Activated CD4-positive, alpha-beta memory T cell treated with anti-CD3 and anti-CD28 coated beads, Interleukin-2, amount 10 ng/mL, durations not matched to agents 7 days and 5 days (primary cell): ENCODE measurements at regions of chr2 and their contacts with region 1.

Region 1: DNA sequence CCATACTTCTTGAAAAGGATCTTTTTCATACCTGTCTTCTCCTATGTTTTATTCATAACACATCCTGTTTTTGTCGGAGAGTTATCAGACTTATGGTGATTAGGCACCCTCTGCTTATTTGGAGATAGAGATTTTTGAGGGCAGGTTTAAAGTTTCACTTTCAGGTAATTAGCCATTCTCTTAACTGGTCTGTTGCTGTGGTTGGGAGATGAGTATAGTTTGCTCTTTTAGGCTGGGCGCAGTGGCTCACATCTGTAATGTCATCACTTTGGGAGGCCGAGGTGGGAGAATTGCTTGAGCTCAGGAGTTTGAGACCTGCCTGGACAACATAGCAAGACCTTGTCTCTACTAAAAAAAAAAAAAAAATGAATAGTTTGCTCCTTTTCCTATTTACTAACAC is 25.3 kb downstream of the SFTPB start:
- DNase-seq: peak; percentile 41
- H3K4me3 Mint-ChIP-seq: no peak overlapping the region
- H3K27ac Mint-ChIP-seq: peak overlapping the region; percentile 88
- H3K4me1 Mint-ChIP-seq: peaks cover 28% of the 10 kb centered on the region
- H3K27me3 Mint-ChIP-seq: no peaks in the 10 kb centered on the region

Region 2: DNA sequence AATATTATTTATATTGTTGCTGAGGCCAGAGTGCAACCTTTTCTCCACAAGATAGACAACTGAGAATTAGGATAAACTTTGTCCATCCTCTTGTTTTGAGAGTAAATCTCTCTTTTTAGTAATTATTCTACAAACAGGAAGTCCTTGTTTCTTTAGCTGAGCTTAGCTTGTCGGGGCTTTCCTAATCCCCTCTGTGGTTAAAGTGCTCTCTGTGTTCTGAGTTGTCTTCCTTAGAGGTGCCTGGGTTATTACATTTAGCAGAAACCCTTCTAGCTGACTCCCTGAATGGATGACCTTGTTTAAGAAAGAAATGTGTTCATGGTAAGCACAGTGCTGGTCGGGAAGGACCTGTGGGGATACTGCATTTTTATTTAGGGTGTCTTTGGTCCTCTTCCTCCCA is 14.1 kb before region 1 on chr2:
- CTCF ChIA-PET with region 1: interaction called, 83 read pairs
- POLR2A ChIA-PET with region 1: interaction called, 7 read pairs
- DNase-seq: no peak
- H3K4me3 Mint-ChIP-seq: no peak overlapping the region
- H3K27ac Mint-ChIP-seq: peak overlapping the region; percentile 59
- H3K4me1 Mint-ChIP-seq: peaks cover 14% of the 10 kb centered on the region
- H3K27me3 Mint-ChIP-seq: no peaks in the 10 kb centered on the region

Region 3: GRCh38 chr2:85655961-85656417 is 13.3 kb after region 1 on chr2:
- CTCF ChIA-PET with region 1: interaction called, 83 read pairs
- POLR2A ChIA-PET with region 1: interaction called, 5 read pairs
- DNase-seq: no peak
- H3K4me3 Mint-ChIP-seq: no peak overlapping the region
- H3K27ac Mint-ChIP-seq: no peak overlapping the region
- H3K4me1 Mint-ChIP-seq: peaks cover 11% of the 10 kb centered on the region
- H3K27me3 Mint-ChIP-seq: no peaks in the 10 kb centered on the region

Region 4: GRCh38 chr2:85707304-85707703 is 64.6 kb after region 1 on chr2:
- CTCF ChIA-PET with region 1: interaction called, 58 read pairs
- POLR2A ChIA-PET with region 1: interaction called, 7 read pairs
- DNase-seq: peak; percentile 75
- H3K4me3 Mint-ChIP-seq: no peak overlapping the region
- H3K27ac Mint-ChIP-seq: peak overlapping the region; percentile 86
- H3K4me1 Mint-ChIP-seq: peaks cover 80% of the 10 kb centered on the region
- H3K27me3 Mint-ChIP-seq: peaks cover 5% of the 10 kb centered on the region

Region 5: GRCh38 chr2:85712849-85713602 is 70.3 kb after region 1 on chr2:
- CTCF ChIA-PET with region 1: interaction called, 58 read pairs
- POLR2A ChIA-PET with region 1: interaction called, 7 read pairs
- DNase-seq: peak; percentile 9
- H3K4me3 Mint-ChIP-seq: no peak overlapping the region
- H3K27ac Mint-ChIP-seq: no peak overlapping the region
- H3K4me1 Mint-ChIP-seq: peaks cover 54% of the 10 kb centered on the region
- H3K27me3 Mint-ChIP-seq: peaks cover 9% of the 10 kb centered on the region

Region 6: DNA sequence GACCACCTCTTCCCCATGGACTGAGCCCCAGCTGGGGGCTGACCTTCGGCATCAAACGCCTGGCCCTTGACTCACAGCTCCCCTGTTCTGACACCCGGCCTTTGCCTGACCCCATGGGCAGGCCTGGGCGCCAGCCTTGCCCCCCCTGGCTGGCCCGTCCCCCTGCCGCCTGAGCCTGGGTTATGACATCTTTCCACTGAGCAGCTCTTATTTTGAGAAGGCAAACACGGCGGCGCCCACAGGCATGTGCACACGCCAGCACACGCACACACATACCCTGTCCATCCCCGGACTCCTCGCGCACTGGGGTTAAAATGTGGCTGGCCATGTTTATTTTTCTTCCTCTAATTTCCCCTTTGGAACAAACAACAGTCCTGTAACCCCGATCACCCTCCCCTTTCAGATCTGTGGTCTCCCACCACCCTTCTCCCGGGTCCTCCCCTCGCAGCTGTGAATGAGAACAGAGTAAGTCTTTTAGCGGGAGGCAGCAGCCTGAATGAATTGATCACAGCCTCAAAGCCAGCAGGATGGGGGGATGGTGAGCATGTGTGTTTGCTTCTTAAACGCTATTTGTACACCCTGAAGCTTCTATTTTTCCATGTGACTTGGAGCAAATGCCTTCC is 99.2 kb after region 1 on chr2:
- CTCF ChIA-PET with region 1: no interaction called
- POLR2A ChIA-PET with region 1: no interaction called
- DNase-seq: no peak
- H3K4me3 Mint-ChIP-seq: no peak overlapping the region
- H3K27ac Mint-ChIP-seq: no peak overlapping the region
- H3K4me1 Mint-ChIP-seq: no peaks in the 10 kb centered on the region
- H3K27me3 Mint-ChIP-seq: peaks cover 86% of the 10 kb centered on the region